Esophagus muscularis mucosa (tissue), 4 donors: ENCODE measurements at regions of chrX and their contacts with region 1.

Region 1: GRCh38 chrX:104098151-104098808 is 14.0 kb upstream of the ZCCHC18 start:
- DNase-seq: no peak
- H3K4me3 ChIP-seq: no peak overlapping the region
- H3K27ac ChIP-seq: no peak overlapping the region
- H3K4me1 ChIP-seq: no peaks in the 10 kb centered on the region
- H3K27me3 ChIP-seq: no peaks in the 10 kb centered on the region
- CTCF ChIP-seq: peak; percentile 53 to 72 (median 59)
- EP300 ChIP-seq: no peak
- POLR2A ChIP-seq: no peak

Region 2: GRCh38 chrX:104136241-104137019 is 38.1 kb after region 1 on chrX:
- intact Hi-C with region 1: loop called (anchors 2 kb)
- DNase-seq: no peak
- H3K4me3 ChIP-seq: peak overlapping the region; percentile 42 to 53 (median 44)
- H3K27ac ChIP-seq: peak overlapping the region; percentile 58 to 71 (median 64)
- H3K4me1 ChIP-seq: peaks cover 0 to 27% (median 13%) of the 10 kb centered on the region in 4 donors
- H3K27me3 ChIP-seq: no peaks in the 10 kb centered on the region
- CTCF ChIP-seq: peak; percentile 68 to 77 (median 77)
- EP300 ChIP-seq: no peak
- POLR2A ChIP-seq: no peak